ENCODE measurements at regions of chr1 and their contacts with region 1.

Region 1: GRCh38 chr1:59296358-59297256 is at the start of gene FGGY:
- DNase-seq: peak; percentile 98 to 99 (median 98)
- ATAC-seq: peak; percentile 94 to 97 (median 95)
- H3K4me3 ChIP-seq: peak within 1 kb of the TSS; percentile 8 to 81 (median 62)
- H3K27ac ChIP-seq: peak within 1 kb of the TSS; percentile 90 to 99 (median 96)
- H3K4me1 ChIP-seq: peaks cover 0 to 45% (median 18%) of the 10 kb centered on the region in 12 donors
- H3K27me3 ChIP-seq: no peaks in the 10 kb centered on the region
- CTCF ChIP-seq: no peak
- POLR2A ChIP-seq: peak; percentile 51 to 78
- total RNA-seq, gene FGGY: 20.8 to 42.9 (median 33.9) TPM

Region 2: DNA sequence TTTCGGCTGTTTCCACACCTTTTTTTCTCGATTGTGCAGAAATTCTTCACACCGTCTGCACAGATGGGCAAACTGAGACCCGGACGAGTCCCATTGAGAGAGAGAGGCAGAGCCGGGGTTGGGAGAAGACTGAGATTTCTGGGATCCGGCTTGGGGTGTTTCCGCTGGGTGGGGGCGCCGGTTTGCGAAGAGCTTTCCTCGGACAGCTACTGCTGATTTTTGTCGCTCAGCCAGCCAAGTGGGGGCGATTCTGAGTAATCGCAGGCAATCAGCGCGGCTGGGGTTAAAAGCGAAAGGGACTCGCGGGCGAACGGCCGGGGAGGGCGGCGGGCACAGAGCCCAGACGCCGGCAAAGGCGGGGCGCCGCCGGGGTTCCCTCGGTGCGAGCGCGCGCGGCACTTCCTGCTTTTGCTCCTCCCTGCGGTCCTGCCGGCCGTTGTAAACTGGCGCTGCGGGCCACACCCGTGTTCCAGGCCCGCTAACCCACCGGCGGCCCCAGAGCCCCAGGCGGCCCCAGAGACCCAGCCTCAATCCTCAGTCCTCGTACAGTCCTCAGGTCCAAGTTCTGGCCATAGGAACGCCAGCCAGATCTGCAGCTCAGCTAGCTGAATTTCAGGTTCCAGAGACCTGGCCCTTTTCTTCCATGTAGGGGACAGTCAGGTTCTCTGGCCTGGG is 480.4 kb before region 1 on chr1:
- intact Hi-C with region 1: loop called in 1 of 10 experiments (anchors 10 kb)
- DNase-seq: peak; percentile 92 to 96 (median 94)
- ATAC-seq: peak; percentile 80 to 93 (median 90)
- H3K4me3 ChIP-seq: peak overlapping the region; percentile 32 to 71 (median 64)
- H3K27ac ChIP-seq: peak overlapping the region; percentile 87 to 96 (median 92)
- H3K4me1 ChIP-seq: peaks cover 0 to 59% (median 20%) of the 10 kb centered on the region in 12 donors
- H3K27me3 ChIP-seq: no peaks in the 10 kb centered on the region
- CTCF ChIP-seq: peak in 3 of 12 donors; percentile 19 to 30 (median 26)
- POLR2A ChIP-seq: peak in 1 of 2 donors; percentile 55

Region 3: DNA sequence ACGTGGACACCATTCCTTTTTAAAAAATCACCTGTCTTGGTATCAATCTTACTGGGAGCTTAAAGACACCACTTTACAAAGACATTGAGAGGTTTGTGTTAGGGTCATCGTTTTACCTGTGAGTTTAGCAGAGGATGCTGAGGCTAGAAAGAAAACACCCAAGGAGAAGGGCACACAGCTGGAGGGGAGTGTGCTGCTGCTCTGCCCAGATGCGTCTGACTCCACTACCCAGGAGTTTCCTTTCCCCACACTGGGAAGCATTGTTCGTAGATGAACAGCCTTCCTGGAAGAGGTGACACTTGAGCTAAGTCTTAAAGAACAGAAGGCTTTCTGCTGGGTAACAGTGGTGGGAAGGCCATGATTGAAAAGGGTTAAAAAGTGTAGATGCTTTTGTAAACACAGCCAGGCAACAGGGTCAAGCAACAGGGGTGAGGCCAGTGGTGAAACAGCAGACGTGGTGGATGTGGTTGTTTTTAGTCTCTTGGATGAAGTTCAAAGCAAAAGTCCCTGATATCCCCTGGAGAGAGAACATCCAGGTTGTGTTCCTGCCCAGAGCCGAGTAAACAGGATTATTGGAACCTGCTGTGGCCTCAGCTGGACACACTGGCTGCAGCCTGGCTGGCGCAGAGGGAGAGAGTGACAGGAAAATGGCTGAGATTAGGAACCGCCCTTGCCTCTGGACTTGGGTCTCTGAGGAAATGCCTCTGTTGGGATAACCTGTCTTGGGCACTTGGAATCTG is 314.2 kb before region 1 on chr1:
- intact Hi-C with region 1: loop called in 2 of 10 experiments (anchors 5 to 10 kb)
- DNase-seq: peak in 4 of 5 donors; percentile 38 to 63 (median 46)
- ATAC-seq: peak; percentile 84 to 96 (median 92)
- H3K4me3 ChIP-seq: no peak overlapping the region
- H3K27ac ChIP-seq: peak overlapping the region; percentile 8 to 69 (median 54)
- H3K4me1 ChIP-seq: peaks cover 0 to 42% (median 19%) of the 10 kb centered on the region in 12 donors
- H3K27me3 ChIP-seq: no peaks in the 10 kb centered on the region
- CTCF ChIP-seq: no peak
- POLR2A ChIP-seq: no peak

Region 4: DNA sequence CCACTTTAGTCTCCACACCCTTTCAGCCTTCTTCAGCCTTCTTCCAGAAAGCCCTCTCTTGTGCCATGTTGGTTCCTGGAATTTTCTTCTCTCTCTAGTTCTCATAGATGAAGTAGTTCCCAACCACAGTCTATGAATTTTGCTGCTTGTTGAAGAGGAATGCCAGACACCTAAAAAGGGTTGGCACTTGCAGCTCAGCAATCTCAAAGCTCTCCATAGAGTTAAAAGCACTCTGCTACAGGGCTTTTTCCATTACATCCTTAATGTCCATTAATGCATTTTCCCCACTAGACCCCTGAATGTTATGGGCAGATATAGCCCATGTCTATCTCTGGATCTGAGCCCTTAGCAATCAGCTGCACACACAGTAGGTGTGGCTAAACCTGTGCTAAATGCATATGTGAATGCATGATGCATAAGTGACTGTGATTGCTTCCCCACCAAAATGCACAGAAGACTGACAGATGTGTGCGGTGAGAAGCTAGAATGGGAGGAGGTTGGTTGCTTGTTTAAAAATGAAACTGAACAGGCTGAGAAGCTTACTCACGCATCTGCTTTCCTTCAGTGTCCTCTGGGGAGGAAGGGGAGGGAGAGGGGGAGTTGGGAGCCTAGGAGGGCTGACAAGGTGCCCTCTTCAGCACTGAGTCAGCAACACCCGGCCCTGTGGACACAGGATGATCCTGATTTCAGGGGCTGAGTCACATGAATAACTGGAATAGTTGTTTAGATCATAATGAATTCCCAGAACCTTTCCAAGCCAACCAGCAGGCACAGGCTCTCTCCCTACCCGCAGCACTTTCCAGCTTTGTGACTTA is 145.8 kb before region 1 on chr1:
- intact Hi-C with region 1: loop called in 6 of 10 experiments (anchors 1 to 5 kb)
- DNase-seq: peak; percentile 73 to 95 (median 78)
- ATAC-seq: peak; percentile 88 to 98 (median 96)
- H3K4me3 ChIP-seq: peak overlapping the region in 8 of 12 donors; percentile 16 to 45 (median 28)
- H3K27ac ChIP-seq: peak overlapping the region; percentile 19 to 94 (median 88)
- H3K4me1 ChIP-seq: peaks cover 0 to 49% (median 30%) of the 10 kb centered on the region in 12 donors
- H3K27me3 ChIP-seq: no peaks in the 10 kb centered on the region
- CTCF ChIP-seq: no peak
- POLR2A ChIP-seq: no peak

Region 5: DNA sequence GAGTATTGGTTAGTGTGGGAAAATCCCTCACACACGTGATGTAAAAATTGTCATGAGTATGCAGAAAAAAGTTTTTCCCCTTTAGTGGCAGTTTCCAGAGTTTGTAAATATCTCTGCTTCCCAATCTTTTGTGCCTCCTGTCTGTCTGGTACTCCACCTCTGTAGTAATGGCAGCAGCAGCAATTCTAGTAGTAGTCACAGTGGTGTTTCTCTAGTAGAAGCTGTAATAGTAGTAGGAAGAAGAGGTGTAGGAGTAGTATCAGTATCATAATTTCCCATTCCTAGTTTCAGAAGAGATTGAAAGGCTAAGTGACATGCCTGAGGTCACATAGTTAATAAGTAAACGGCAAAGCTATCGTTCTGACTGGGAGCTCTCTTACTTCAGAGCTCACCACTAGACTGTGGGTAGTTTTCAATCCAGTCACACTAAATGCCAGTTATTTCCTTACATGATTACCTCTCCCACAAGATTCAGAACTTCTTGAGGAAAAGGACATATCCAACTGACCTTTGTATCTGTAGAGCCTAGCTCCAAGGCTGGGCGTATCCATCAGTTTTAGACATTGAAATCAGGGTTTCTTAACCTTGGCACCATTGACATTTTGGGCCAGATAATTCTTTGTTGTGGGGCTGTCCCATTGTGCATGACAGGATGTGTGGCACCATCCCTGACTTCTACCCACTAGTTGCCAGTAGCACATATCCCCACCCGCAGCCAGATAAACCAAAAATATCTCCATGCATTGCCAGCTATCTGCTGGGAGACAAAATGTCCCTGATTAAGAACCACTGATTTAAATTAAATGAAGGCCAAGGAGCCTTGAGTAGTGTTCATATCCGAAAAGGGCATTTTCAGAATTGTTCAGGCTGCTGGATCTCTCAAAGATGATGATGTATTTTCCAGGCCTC is 136.2 kb after region 1 on chr1:
- intact Hi-C with region 1: loop called in 1 of 10 experiments (anchors 5 kb)
- DNase-seq: no peak
- ATAC-seq: peak in 1 of 4 donors; percentile 17
- H3K4me3 ChIP-seq: no peak overlapping the region
- H3K27ac ChIP-seq: peak overlapping the region in 2 of 12 donors; percentile 3 to 46
- H3K4me1 ChIP-seq: peaks cover 0 to 28% (median 12%) of the 10 kb centered on the region in 12 donors
- H3K27me3 ChIP-seq: no peaks in the 10 kb centered on the region
- CTCF ChIP-seq: no peak
- POLR2A ChIP-seq: no peak

Region 6: DNA sequence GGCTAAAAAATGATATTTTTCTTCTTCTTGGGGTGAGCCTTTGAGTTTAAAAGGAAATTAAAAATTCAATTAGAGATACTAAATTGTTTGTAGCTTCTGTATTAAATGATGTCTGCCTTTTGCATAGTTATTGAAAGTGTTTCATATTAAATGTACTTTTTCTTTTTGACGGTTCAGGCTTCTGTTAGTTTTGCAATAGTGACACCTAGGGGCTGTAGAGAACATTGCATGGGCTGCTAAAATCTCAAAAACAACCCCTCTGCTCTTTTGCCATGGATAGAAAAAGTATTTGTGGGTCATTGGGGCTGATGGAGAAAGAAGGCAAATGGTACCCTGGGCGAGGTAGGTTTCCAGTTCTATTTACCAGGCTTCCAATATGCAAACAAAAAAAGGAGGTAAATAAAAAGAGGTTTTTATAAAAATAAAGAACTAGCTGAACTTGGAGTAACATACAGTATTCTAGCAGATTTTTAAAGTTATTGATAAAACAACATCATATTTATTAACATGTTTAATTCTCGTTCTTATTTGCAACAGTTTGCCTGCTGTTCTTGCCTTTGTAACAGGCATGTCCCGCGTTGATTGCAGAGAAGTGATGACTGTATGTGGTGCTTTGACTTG is 402.7 kb after region 1 on chr1:
- intact Hi-C with region 1: loop called in 7 of 10 experiments (anchors 5 to 10 kb)
- DNase-seq: no peak
- ATAC-seq: peak in 1 of 4 donors; percentile 41
- H3K4me3 ChIP-seq: no peak overlapping the region
- H3K27ac ChIP-seq: peak overlapping the region in 2 of 12 donors; percentile 19 to 23
- H3K4me1 ChIP-seq: peaks cover 0 to 54% (median 17%) of the 10 kb centered on the region in 12 donors
- H3K27me3 ChIP-seq: no peaks in the 10 kb centered on the region
- CTCF ChIP-seq: peak; percentile 86 to 97 (median 94)
- POLR2A ChIP-seq: no peak